ENCODE measurements at regions of chr15 and their contacts with region 1.

Region 1: GRCh38 chr15:80058851-80059785 is at the start of gene ZFAND6:
- DNase-seq: peak; percentile 74
- ATAC-seq: peak; percentile 80
- H3K4me3 ChIP-seq: peak within 1 kb of the TSS; percentile 98
- H3K27ac ChIP-seq: peak within 1 kb of the TSS; percentile 88
- H3K4me1 ChIP-seq: peaks cover 32% of the 10 kb centered on the region
- H3K27me3 ChIP-seq: no peaks in the 10 kb centered on the region
- CTCF ChIP-seq: peak in 1 of 3 experiments; percentile 27; a peak in 2 of 6 replicates
- EP300 ChIP-seq: peak in 1 of 2 experiments; percentile 42; a peak in 1 of 4 replicates
- POLR2A ChIP-seq: peak; percentile 87
- RAD21 ChIP-seq: no peak
- polyA plus RNA-seq, gene ZFAND6: 98.1 to 111 TPM

Region 2: GRCh38 chr15:79872358-79873017 is 186.6 kb before region 1 on chr15:
- CTCF ChIA-PET with region 1: no interaction called
- POLR2A ChIA-PET with region 1: no interaction called
- RAD21 ChIA-PET with region 1: no interaction called
- SMC1A ChIA-PET with region 1: no interaction called
- in situ Hi-C with region 1: no loop called
- intact Hi-C with region 1: no loop called
- DNase-seq: no peak
- ATAC-seq: peak; percentile 54
- H3K4me3 ChIP-seq: no peak overlapping the region
- H3K27ac ChIP-seq: no peak overlapping the region
- H3K4me1 ChIP-seq: no peaks in the 10 kb centered on the region
- H3K27me3 ChIP-seq: no peaks in the 10 kb centered on the region
- CTCF ChIP-seq: no peak
- EP300 ChIP-seq: no peak
- POLR2A ChIP-seq: no peak
- RAD21 ChIP-seq: no peak

Region 3: DNA sequence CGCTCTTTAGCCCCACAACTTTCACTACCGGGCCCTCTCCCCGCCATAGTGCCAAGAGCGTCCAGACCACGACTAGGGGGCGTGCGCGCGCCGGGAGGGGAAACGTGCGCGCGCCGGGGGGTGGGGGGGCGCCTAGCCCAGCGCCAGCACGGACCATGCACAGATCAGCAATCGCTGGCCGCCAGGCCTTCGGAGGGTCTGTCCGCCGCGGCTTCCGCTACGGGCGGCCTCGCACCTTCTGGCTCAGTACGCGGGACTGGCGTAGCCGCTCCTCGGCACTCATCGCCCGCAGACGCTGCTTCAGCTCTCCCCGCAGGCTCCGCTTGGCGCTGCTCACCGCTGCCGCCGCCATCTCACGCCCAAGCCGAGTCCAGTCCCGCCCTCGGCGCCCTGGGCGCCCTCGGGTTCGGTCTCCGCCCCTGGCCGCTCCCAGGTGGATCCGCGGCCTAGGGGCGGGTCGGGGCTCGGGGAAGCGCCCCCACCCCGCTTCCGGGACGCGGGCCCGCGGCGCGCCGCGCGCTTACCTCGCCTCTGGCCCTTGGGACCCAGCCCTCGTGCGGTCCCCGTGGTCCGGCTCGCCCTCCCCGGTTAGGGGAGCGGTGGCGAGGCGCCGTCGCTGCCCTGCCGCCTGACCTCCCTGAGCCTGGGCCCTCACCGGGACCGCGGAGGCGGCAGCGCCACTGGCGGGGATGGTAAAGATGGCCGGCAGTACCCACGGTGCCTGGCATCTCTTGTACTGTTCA is 162.3 kb before region 1 on chr15 and contains the start of gene MTHFS:
- CTCF ChIA-PET with region 1: no interaction called
- POLR2A ChIA-PET with region 1: no interaction called
- RAD21 ChIA-PET with region 1: interaction called, 4 read pairs
- SMC1A ChIA-PET with region 1: interaction called, 3 read pairs
- in situ Hi-C with region 1: no loop called
- intact Hi-C with region 1: loop called (anchors 5 kb)
- DNase-seq: no peak
- ATAC-seq: peak; percentile 86
- H3K4me3 ChIP-seq: peak within 1 kb of the TSS; percentile 66
- H3K27ac ChIP-seq: peak within 1 kb of the TSS; percentile 85
- H3K4me1 ChIP-seq: peaks cover 16% of the 10 kb centered on the region
- H3K27me3 ChIP-seq: no peaks in the 10 kb centered on the region
- CTCF ChIP-seq: peak; percentile 44 to 62 (median 54)
- EP300 ChIP-seq: 0 out of 4 replicates have a peak, but pooled peaks of 1 of the 2 experiments have one; percentile 26
- POLR2A ChIP-seq: peak; percentile 94
- RAD21 ChIP-seq: peak; percentile 57
- polyA plus RNA-seq, gene MTHFS: 14.0 to 24.5 TPM

Region 4: DNA sequence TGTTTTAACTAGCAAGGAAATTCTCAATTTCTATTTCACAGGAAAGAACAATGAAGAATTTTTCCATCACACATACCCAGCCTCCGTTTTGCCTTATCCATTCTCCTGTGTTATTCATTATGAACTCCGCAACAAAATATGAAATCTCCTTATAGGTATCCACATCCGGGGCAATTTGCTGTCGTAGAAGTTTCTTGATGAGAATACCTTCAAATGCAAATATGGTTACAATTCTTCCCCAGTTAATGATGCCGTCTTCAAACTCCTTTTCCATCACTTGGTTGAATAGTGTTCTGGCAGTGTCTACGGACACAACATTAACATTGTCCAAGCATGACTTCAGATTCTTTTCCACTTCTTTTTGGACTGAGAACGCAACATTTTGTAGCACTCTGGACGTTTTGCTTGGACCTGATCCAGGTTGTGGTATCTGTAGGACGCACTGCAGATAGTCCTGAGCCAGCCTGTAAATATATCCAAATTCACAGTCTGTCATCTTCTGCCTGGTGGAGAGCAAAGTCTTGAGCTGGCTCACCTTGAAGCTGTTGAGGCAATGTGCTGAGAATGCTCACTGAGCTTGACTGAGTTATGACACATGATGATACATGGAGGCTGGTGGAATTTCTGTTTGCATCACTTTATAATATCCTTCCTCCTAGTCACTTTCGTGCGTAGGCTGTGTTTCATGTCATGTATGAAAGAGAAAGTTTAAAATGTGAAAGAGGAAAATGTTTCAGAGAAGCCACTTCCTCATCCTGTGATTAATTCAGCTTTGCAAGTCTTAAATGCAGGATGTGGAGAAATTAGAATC is 88.3 kb before region 1 on chr15 and contains the start of gene BCL2A1:
- CTCF ChIA-PET with region 1: no interaction called
- POLR2A ChIA-PET with region 1: interaction called, 8 read pairs
- RAD21 ChIA-PET with region 1: interaction called, 14 read pairs
- SMC1A ChIA-PET with region 1: interaction called, 7 read pairs
- in situ Hi-C with region 1: no loop called
- intact Hi-C with region 1: loop called (anchors 5 kb)
- DNase-seq: peak; percentile 96
- ATAC-seq: peak; percentile 72
- H3K4me3 ChIP-seq: peak within 1 kb of the TSS; percentile 88
- H3K27ac ChIP-seq: peak within 1 kb of the TSS; percentile 88
- H3K4me1 ChIP-seq: peaks cover 26% of the 10 kb centered on the region
- H3K27me3 ChIP-seq: no peaks in the 10 kb centered on the region
- CTCF ChIP-seq: no peak
- EP300 ChIP-seq: peak; percentile 93 to 94
- POLR2A ChIP-seq: peak; percentile 95
- RAD21 ChIP-seq: no peak; the same call in 1 of the 2 replicates
- polyA plus RNA-seq, gene BCL2A1: 536 to 570 TPM

Region 5: DNA sequence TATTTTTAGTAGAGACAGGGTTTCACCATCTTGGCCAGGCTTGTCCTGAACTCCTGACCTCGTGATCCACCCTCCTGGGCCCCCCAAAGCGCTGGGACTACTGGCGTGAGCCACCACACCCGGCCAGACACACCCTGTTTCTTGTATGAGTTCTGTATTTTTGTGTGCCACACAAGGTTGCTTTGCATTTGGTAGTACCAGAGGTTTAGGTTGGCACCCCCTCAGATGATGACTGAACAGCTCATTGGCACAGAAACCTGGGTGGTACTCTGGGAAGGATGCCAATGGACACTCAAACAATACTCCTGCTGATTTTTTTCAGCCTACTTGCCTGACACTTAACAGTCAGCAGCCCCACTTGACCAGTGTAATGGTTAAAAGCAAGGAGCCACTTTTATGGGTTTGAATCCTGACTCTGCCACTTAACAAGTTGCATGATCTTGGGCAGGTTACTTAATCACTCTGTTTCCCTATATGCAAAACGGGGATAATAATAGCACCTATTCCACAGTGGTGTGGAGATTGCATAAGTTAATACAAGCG is 48.9 kb before region 1 on chr15:
- CTCF ChIA-PET with region 1: interaction called, 6 read pairs
- POLR2A ChIA-PET with region 1: interaction called, 8 read pairs
- RAD21 ChIA-PET with region 1: interaction called, 5 read pairs
- SMC1A ChIA-PET with region 1: interaction called, 20 read pairs
- in situ Hi-C with region 1: no loop called
- intact Hi-C with region 1: no loop called
- DNase-seq: no peak
- ATAC-seq: peak; percentile 61
- H3K4me3 ChIP-seq: peak overlapping the region; percentile 32; the same call in 1 of the 2 replicates
- H3K27ac ChIP-seq: peak overlapping the region; percentile 93
- H3K4me1 ChIP-seq: peaks cover 43% of the 10 kb centered on the region
- H3K27me3 ChIP-seq: no peaks in the 10 kb centered on the region
- CTCF ChIP-seq: no peak
- EP300 ChIP-seq: no peak
- POLR2A ChIP-seq: no peak
- RAD21 ChIP-seq: no peak

Region 6: GRCh38 chr15:80031841-80032240 is 27.3 kb before region 1 on chr15:
- CTCF ChIA-PET with region 1: interaction called, 4 read pairs
- POLR2A ChIA-PET with region 1: interaction called, 13 read pairs
- RAD21 ChIA-PET with region 1: interaction called, 4 read pairs
- SMC1A ChIA-PET with region 1: interaction called, 6 read pairs
- in situ Hi-C with region 1: no loop called
- intact Hi-C with region 1: loop called (anchors 1 kb)
- DNase-seq: no peak
- ATAC-seq: peak; percentile 35
- H3K4me3 ChIP-seq: no peak overlapping the region
- H3K27ac ChIP-seq: no peak overlapping the region; the same call in 1 of the 2 replicates
- H3K4me1 ChIP-seq: peaks cover 47% of the 10 kb centered on the region
- H3K27me3 ChIP-seq: no peaks in the 10 kb centered on the region
- CTCF ChIP-seq: no peak
- EP300 ChIP-seq: no peak
- POLR2A ChIP-seq: no peak
- RAD21 ChIP-seq: no peak

Region 7: GRCh38 chr15:80090879-80091503 is 31.9 kb after region 1 on chr15:
- CTCF ChIA-PET with region 1: interaction called, 6 read pairs
- POLR2A ChIA-PET with region 1: no interaction called
- RAD21 ChIA-PET with region 1: interaction called, 4 read pairs
- SMC1A ChIA-PET with region 1: interaction called, 17 read pairs
- in situ Hi-C with region 1: no loop called
- intact Hi-C with region 1: no loop called
- DNase-seq: no peak
- ATAC-seq: peak; percentile 67
- H3K4me3 ChIP-seq: no peak overlapping the region
- H3K27ac ChIP-seq: no peak overlapping the region
- H3K4me1 ChIP-seq: no peaks in the 10 kb centered on the region
- H3K27me3 ChIP-seq: no peaks in the 10 kb centered on the region
- CTCF ChIP-seq: peak; percentile 4 to 42 (median 31); a peak in 2 of 6 replicates
- EP300 ChIP-seq: no peak
- POLR2A ChIP-seq: no peak
- RAD21 ChIP-seq: 0 out of 2 replicates have a peak, but pooled peaks have one; percentile 24

Region 8: GRCh38 chr15:80173022-80173759 is 114.1 kb after region 1 on chr15:
- CTCF ChIA-PET with region 1: interaction called, 8 read pairs
- POLR2A ChIA-PET with region 1: no interaction called
- RAD21 ChIA-PET with region 1: interaction called, 11 read pairs
- SMC1A ChIA-PET with region 1: interaction called, 27 read pairs
- in situ Hi-C with region 1: no loop called
- intact Hi-C with region 1: loop called (anchors 5 kb)
- DNase-seq: no peak
- ATAC-seq: peak; percentile 99
- H3K4me3 ChIP-seq: no peak overlapping the region
- H3K27ac ChIP-seq: no peak overlapping the region
- H3K4me1 ChIP-seq: no peaks in the 10 kb centered on the region; the same call in 1 of the 2 replicates
- H3K27me3 ChIP-seq: no peaks in the 10 kb centered on the region
- CTCF ChIP-seq: peak; percentile 80 to 84 (median 81)
- EP300 ChIP-seq: no peak
- POLR2A ChIP-seq: no peak
- RAD21 ChIP-seq: peak; percentile 96

Measured in GM12878 (cell line).